ENCODE measurements at regions of chr6 and their contacts with region 1.

Region 1: GRCh38 chr6:137102851-137103492 is 58.2 kb upstream of the IL20RA start:
- DNase-seq: no peak
- ATAC-seq: no peak
- H3K4me3 ChIP-seq: no peak overlapping the region
- H3K27ac ChIP-seq: no peak overlapping the region
- H3K4me1 ChIP-seq: peaks cover 0 to 20% (median 0%) of the 10 kb centered on the region in 9 donors
- H3K27me3 ChIP-seq: no peaks in the 10 kb centered on the region
- CTCF ChIP-seq: no peak

Region 2: GRCh38 chr6:137202078-137202477 is 99.1 kb after region 1 on chr6:
- intact Hi-C with region 1: loop called in 5 of 10 experiments (anchors 5 to 10 kb)
- DNase-seq: no peak
- ATAC-seq: peak in 7 of 8 donors; percentile 72 to 89 (median 76)
- H3K4me3 ChIP-seq: no peak overlapping the region
- H3K27ac ChIP-seq: no peak overlapping the region
- H3K4me1 ChIP-seq: peaks cover 0 to 48% (median 26%) of the 10 kb centered on the region in 9 donors
- H3K27me3 ChIP-seq: no peaks in the 10 kb centered on the region
- CTCF ChIP-seq: peak; percentile 16 to 61 (median 43)

Region 3: DNA sequence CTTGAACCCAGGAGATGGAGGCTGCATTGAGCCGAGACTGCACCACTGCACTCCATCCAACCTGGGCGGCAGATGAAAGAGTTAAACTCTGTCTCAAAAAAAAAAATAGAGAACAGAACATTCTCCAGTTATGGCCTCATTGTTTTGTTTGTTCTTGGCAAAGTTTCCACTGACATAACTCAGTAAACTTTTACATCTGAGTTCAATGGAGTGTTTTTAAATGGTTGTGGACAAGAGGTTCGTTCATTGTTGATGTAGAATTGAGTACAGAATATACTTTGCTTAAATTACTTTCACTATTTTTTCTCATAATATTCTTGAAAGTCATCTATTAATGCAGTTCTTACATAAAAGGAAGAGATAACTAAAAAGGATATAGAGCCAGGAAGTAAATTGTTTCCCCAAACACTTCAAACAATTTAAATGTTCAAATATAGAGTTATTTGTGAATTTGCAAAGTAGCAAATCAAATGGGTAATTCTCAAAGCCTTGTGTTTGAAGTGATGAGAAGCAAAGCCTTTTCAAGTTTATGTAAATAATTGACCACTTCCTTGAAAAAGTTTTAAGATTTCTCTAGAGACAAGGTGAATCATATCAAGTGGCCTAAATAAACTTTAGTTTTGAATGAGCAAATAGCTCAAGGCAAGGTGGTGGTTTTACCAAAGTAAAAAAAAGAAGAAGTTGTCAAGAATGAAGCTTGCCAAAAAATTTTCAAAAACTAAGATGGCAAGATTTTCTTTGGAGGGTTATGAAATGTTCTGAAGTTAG is 158.6 kb after region 1 on chr6:
- intact Hi-C with region 1: loop called in 1 of 10 experiments (anchors 5 kb)
- DNase-seq: no peak
- ATAC-seq: peak in 6 of 8 donors; percentile 39 to 85 (median 62)
- H3K4me3 ChIP-seq: no peak overlapping the region
- H3K27ac ChIP-seq: peak overlapping the region; percentile 0 to 71 (median 49)
- H3K4me1 ChIP-seq: peaks cover 0 to 44% (median 18%) of the 10 kb centered on the region in 9 donors
- H3K27me3 ChIP-seq: no peaks in the 10 kb centered on the region
- CTCF ChIP-seq: no peak

Measured in heart right ventricle (tissue), 16 donors.